Heart right ventricle (tissue), 16 donors: ENCODE measurements at regions of chr15 and their contacts with region 1.

Region 1: DNA sequence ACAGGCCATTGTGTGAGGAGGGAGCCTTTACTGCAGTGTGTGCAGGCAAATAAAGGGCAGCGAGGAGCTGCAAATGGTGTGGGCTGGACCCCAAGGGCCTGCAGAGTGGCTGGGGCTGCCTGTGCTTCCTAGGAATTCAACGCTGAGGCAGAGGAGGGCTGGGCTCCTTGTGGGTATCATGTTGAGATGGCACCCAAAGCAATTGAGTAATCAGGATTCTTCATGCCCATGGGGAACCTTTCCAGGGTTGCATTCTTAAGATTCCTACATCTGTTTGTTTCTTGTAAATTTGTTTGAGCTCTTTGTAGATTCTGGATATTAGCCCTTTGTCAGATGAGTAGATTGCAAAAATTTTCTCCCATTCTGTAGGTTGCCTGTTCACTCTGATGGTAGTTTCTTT is 85.4 kb upstream of the LIPC start:
- DNase-seq: no peak
- ATAC-seq: no peak
- H3K4me3 ChIP-seq: no peak overlapping the region
- H3K27ac ChIP-seq: no peak overlapping the region
- H3K4me1 ChIP-seq: no peaks in the 10 kb centered on the region
- H3K27me3 ChIP-seq: no peaks in the 10 kb centered on the region
- CTCF ChIP-seq: no peak

Region 2: GRCh38 chr15:58425185-58425584 is 78.8 kb after region 1 on chr15:
- intact Hi-C with region 1: loop called in 1 of 10 experiments (anchors 5 kb)
- DNase-seq: no peak
- ATAC-seq: no peak
- H3K4me3 ChIP-seq: no peak overlapping the region
- H3K27ac ChIP-seq: no peak overlapping the region
- H3K4me1 ChIP-seq: peaks cover 0 to 22% (median 7%) of the 10 kb centered on the region in 9 donors
- H3K27me3 ChIP-seq: no peaks in the 10 kb centered on the region
- CTCF ChIP-seq: no peak